Left cardiac atrium (tissue), 4 donors: ENCODE measurements at regions of chr10 and their contacts with region 1.

Region 1: DNA sequence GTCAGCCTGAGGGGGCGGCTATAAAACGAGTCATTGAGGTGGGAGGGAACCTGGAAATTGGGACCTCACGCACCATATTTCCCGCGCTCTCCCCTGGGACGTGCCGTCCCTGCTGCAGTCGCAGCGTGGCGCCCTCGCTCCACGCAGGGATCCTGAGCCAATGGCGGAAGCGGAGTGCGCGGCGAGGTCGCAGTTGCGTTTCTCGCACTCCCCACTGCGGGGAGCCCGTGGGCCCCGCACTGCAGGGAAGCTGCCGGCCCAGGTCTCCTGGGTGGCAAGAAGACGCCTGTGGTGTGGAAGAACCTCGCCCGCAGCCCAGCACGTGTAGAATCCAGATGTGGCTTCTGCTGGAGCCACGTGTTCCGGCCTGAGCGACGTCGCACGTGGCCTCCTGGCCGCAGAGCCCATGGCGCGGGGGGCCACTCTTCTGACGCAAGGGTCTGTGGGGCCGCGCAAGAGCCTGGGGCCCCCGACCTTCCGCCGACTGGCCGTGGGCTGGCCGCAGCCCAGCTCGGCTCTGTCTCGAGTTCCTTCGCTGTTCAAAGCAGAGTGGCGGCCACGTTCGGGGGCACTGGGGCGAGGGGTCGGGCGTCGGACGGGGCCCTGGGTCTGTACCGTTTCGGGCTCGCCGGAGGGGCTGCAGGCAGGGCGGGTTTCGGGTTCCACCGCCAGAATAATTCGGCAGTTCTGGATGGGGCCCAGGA is 26.4 kb downstream of the HIF1AN start:
- DNase-seq: peak; percentile 67
- ATAC-seq: peak; percentile 78 to 80

Region 2: GRCh38 chr10:100319707-100320106 is 242.5 kb before region 1 on chr10:
- intact Hi-C with region 1: no loop called
- DNase-seq: no peak
- ATAC-seq: no peak

Region 3: DNA sequence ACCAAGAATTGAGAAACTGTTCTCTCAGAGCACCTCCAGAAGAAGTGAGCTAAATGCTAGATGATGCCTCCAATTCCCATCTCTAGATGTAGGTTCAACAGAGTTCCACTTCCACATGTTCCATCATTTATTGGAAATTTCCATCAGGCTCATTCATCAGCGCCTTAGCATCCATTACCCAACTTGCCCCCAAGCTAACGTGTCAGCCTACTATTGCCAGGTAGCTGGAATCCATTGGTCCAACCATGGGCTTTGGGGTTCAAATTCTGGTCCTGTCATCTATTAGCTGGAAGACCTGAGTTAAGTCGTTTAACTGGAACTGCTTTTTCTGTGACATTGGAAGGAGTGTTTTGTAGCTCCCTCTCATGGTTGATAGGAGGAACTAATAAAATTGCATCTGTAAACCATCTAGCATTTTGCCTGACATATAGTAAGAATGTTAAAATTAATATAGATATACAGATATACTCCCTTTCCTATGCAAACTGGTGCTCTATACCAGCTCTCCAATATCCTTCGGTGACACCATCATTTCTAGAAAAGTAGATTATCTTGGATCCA is 326.7 kb after region 1 on chr10:
- intact Hi-C with region 1: loop called in 1 of 2 experiments (anchors 10 kb)
- DNase-seq: no peak
- ATAC-seq: no peak